CD4-positive, alpha-beta T cell (primary cell): ENCODE measurements at regions of chr6 and their contacts with region 1.

Region 1: GRCh38 chr6:30489081-30490025 is at the start of gene HLA-E:
- DNase-seq: peak; percentile 74 to 99 (median 88)
- ATAC-seq: peak; percentile 80
- H3K4me3 ChIP-seq: peak within 1 kb of the TSS; percentile 83
- H3K4me3 Mint-ChIP-seq: peak within 1 kb of the TSS; percentile 100
- H3K27ac ChIP-seq: peak within 1 kb of the TSS; percentile 95 to 96
- H3K27ac Mint-ChIP-seq: peak within 1 kb of the TSS; percentile 98
- H3K4me1 ChIP-seq: peaks cover 59% of the 10 kb centered on the region
- H3K4me1 Mint-ChIP-seq: peaks cover 62% of the 10 kb centered on the region
- H3K27me3 ChIP-seq: no peaks in the 10 kb centered on the region
- H3K27me3 Mint-ChIP-seq: no peaks in the 10 kb centered on the region
- CTCF ChIP-seq: no peak
- total RNA-seq, gene HLA-E: 1,136 to 1,173 TPM

Region 2: DNA sequence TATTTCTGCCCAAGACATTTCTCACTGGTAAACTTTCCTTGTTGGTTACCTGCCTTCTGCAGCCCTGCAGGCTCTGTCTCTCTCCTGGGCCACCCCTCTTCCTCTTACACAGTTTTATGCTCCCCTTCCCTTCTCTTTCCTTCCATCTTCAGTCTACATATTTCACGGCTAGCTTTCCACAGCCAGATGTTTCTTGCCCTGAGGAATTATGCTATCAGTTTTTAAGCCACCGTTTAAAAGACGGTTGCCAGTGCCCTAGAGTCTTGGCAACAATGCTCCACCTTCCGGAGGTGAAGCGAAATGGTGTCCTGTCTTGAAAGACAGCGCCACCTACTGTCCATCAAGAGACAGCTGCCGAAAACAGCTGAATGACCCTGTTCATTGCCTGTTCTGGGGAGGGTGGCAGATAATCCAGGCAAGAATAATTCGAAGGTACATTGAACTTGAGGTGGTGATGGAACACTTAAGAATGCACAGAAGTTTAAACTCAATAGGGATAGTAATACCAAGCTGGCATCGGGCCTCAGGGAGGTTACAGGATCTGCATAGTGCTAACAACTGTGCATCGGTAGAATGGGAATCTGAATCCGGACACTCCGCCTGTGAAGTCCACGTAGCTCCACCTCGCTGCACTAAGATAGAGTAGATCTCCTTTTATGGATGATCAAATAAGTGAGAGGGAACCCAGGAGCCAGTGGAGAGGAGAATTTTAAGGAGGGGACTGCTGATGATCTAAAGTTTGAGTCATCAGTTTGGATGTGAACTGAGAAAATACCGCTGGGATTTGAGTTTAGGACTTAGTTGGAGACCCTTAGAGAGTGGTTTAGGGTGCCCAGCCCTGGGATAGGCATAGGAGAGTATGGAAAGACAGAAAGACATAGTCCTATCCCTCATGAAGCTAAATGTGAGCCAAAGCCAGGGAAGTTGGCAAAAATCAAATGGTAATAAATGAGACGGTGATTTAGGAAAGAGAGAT is 358.2 kb before region 1 on chr6:
- CTCF ChIA-PET with region 1: no interaction called
- POLR2A ChIA-PET with region 1: no interaction called
- intact Hi-C with region 1: no loop called
- DNase-seq: peak; percentile 45 to 92 (median 60)
- ATAC-seq: peak; percentile 98
- H3K4me3 ChIP-seq: no peak overlapping the region
- H3K4me3 Mint-ChIP-seq: no peak overlapping the region
- H3K27ac ChIP-seq: no peak overlapping the region
- H3K27ac Mint-ChIP-seq: no peak overlapping the region
- H3K4me1 ChIP-seq: peaks cover 13% of the 10 kb centered on the region
- H3K4me1 Mint-ChIP-seq: peaks cover 5% of the 10 kb centered on the region
- H3K27me3 ChIP-seq: peaks cover 37 to 58% of the 10 kb centered on the region in 2 experiments
- H3K27me3 Mint-ChIP-seq: peaks cover 71% of the 10 kb centered on the region
- CTCF ChIP-seq: peak; percentile 100

Region 3: DNA sequence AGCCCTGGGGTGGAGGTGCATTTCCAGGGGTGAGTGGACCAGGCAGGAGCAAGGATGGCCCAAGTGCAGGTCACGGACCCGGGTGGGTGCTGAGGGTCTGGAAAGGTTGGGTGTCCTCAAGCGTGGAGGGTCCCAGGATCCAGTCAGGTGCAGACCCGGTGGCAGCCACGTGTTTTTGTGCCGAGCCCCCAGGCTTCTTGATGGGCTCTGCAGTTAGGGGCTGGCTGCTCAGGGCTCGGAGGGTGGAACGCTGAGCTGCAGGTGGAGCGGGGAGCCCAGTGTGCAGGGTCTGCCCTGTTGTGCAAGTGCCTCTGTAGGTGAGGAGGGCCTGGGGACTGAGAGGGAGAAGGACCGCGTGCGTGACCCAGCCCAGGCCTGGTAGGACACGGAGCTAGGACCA is 70.9 kb before region 1 on chr6:
- CTCF ChIA-PET with region 1: no interaction called
- POLR2A ChIA-PET with region 1: no interaction called
- intact Hi-C with region 1: no loop called
- DNase-seq: no peak
- ATAC-seq: no peak
- H3K4me3 ChIP-seq: no peak overlapping the region
- H3K4me3 Mint-ChIP-seq: no peak overlapping the region
- H3K27ac ChIP-seq: no peak overlapping the region
- H3K27ac Mint-ChIP-seq: no peak overlapping the region
- H3K4me1 ChIP-seq: no peaks in the 10 kb centered on the region
- H3K4me1 Mint-ChIP-seq: no peaks in the 10 kb centered on the region
- H3K27me3 ChIP-seq: peaks cover 2 to 13% of the 10 kb centered on the region in 2 experiments
- H3K27me3 Mint-ChIP-seq: peaks cover 64% of the 10 kb centered on the region
- CTCF ChIP-seq: no peak

Region 4: GRCh38 chr6:30500421-30501355 is 11.3 kb after region 1 on chr6:
- CTCF ChIA-PET with region 1: interaction called, 4 read pairs
- POLR2A ChIA-PET with region 1: interaction called, 77 read pairs
- intact Hi-C with region 1: no loop called
- DNase-seq: peak in 2 of 14 experiments; percentile 37 to 45
- ATAC-seq: peak; percentile 55
- H3K4me3 ChIP-seq: peak overlapping the region; percentile 35
- H3K4me3 Mint-ChIP-seq: peak overlapping the region; percentile 57
- H3K27ac ChIP-seq: peak overlapping the region in 1 of 2 donors; percentile 10
- H3K27ac Mint-ChIP-seq: peak overlapping the region; percentile 75
- H3K4me1 ChIP-seq: peaks cover 29% of the 10 kb centered on the region
- H3K4me1 Mint-ChIP-seq: peaks cover 40% of the 10 kb centered on the region
- H3K27me3 ChIP-seq: no peaks in the 10 kb centered on the region
- H3K27me3 Mint-ChIP-seq: no peaks in the 10 kb centered on the region
- CTCF ChIP-seq: no peak

Region 5: GRCh38 chr6:30508890-30509736 is 19.8 kb after region 1 on chr6:
- CTCF ChIA-PET with region 1: interaction called, 4 read pairs
- POLR2A ChIA-PET with region 1: interaction called, 226 read pairs
- intact Hi-C with region 1: loop called (anchors 2 kb)
- DNase-seq: peak in 3 of 14 experiments; percentile 84 to 88 (median 86)
- ATAC-seq: peak; percentile 85
- H3K4me3 ChIP-seq: peak overlapping the region; percentile 36
- H3K4me3 Mint-ChIP-seq: peak overlapping the region; percentile 72
- H3K27ac ChIP-seq: peak overlapping the region; percentile 47 to 65
- H3K27ac Mint-ChIP-seq: peak overlapping the region; percentile 79
- H3K4me1 ChIP-seq: peaks cover 75% of the 10 kb centered on the region
- H3K4me1 Mint-ChIP-seq: peaks cover 62% of the 10 kb centered on the region
- H3K27me3 ChIP-seq: no peaks in the 10 kb centered on the region
- H3K27me3 Mint-ChIP-seq: no peaks in the 10 kb centered on the region
- CTCF ChIP-seq: no peak

Region 6: DNA sequence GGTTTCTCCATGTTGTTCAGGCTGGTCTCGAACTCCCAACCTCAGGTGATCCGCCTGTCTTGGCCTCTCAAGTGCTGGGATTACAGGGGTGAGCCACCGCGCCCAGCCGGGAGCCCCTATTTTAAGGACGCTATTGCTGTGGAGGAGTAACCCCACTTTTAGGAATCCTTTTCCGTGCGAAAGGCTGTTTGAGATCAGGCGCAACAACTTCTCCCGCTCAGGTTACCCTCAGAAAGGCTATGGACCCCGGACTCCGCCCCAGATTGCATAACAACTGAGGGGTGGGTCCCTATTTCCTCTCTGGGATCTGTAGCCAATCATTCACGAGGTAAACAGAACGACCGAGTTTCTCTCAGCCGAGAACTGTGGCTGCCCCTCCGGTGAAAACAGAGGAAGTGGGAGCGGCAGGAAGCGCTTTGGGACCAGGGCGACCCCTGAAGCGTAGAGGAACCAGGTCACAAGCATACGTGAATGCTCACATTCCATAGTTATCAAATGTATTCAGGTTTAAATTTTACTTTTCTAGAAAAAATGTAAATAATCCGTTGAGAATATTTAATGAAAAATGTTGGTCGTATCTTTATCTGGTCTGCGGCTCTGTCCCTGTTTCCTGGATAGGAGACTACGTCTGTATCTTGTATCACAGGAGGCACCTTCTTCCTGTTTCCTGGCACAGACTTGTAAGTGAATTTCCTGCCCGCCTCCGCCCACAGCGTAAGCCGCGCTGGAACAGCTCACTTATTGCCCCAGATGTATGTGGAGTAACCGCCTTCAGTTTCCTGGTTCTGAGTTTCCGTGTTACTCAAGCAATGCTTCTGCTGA is 26.8 kb after region 1 on chr6:
- CTCF ChIA-PET with region 1: interaction called, 12 read pairs
- POLR2A ChIA-PET with region 1: interaction called, 226 read pairs
- intact Hi-C with region 1: loop called (anchors 1 kb)
- DNase-seq: peak; percentile 78 to 98 (median 87)
- ATAC-seq: peak; percentile 84
- H3K4me3 ChIP-seq: peak overlapping the region; percentile 55
- H3K4me3 Mint-ChIP-seq: peak overlapping the region; percentile 89
- H3K27ac ChIP-seq: peak overlapping the region; percentile 92 to 98
- H3K27ac Mint-ChIP-seq: peak overlapping the region; percentile 99
- H3K4me1 ChIP-seq: peaks cover 83% of the 10 kb centered on the region
- H3K4me1 Mint-ChIP-seq: peaks cover 69% of the 10 kb centered on the region
- H3K27me3 ChIP-seq: no peaks in the 10 kb centered on the region
- H3K27me3 Mint-ChIP-seq: no peaks in the 10 kb centered on the region
- CTCF ChIP-seq: no peak

Region 7: DNA sequence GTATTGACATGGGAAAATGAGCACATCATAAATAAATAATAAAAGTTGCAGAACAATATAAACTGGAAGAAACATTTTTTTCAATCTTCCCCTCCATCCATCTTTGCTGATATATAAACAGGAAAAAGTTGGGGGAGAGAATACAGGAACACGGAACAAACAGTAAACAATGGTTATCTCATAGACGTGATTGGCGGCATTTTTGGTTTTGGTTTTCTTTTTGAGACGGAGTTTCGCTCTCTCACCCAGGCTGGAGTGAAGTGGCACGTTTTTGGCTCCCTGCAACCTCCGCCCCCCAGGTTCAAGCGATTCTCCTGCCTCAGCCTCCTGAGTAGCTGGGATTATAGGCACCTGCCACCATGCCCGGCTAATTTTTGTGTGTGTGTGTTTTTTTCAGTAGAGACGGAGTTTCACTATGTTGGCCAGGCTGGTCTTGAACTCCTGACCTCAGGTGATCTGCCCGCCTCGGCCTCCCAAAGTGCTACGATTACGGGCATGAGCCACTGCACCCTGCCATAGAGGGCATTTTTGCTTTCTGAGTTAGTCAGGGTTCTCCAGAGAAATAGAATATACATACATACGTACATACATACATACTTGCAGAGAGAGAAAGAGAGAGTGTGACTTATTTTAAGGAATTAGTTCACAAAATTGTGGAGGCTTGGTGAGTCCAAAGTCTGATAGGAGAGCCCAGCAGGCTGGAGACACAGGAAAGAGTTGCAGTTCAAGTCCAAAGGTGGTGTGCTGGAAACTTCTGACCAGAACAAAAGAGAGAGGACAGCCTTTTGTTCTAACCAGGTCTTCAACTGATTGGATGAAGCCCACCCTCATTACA is 44.3 kb after region 1 on chr6:
- CTCF ChIA-PET with region 1: interaction called, 34 read pairs
- POLR2A ChIA-PET with region 1: interaction called, 120 read pairs
- intact Hi-C with region 1: no loop called
- DNase-seq: peak in 2 of 14 experiments; percentile 56 to 76
- ATAC-seq: no peak
- H3K4me3 ChIP-seq: peak overlapping the region; percentile 29
- H3K4me3 Mint-ChIP-seq: peak overlapping the region; percentile 90
- H3K27ac ChIP-seq: no peak overlapping the region
- H3K27ac Mint-ChIP-seq: peak overlapping the region; percentile 79
- H3K4me1 ChIP-seq: peaks cover 40% of the 10 kb centered on the region
- H3K4me1 Mint-ChIP-seq: peaks cover 41% of the 10 kb centered on the region
- H3K27me3 ChIP-seq: no peaks in the 10 kb centered on the region
- H3K27me3 Mint-ChIP-seq: no peaks in the 10 kb centered on the region
- CTCF ChIP-seq: no peak

Region 8: DNA sequence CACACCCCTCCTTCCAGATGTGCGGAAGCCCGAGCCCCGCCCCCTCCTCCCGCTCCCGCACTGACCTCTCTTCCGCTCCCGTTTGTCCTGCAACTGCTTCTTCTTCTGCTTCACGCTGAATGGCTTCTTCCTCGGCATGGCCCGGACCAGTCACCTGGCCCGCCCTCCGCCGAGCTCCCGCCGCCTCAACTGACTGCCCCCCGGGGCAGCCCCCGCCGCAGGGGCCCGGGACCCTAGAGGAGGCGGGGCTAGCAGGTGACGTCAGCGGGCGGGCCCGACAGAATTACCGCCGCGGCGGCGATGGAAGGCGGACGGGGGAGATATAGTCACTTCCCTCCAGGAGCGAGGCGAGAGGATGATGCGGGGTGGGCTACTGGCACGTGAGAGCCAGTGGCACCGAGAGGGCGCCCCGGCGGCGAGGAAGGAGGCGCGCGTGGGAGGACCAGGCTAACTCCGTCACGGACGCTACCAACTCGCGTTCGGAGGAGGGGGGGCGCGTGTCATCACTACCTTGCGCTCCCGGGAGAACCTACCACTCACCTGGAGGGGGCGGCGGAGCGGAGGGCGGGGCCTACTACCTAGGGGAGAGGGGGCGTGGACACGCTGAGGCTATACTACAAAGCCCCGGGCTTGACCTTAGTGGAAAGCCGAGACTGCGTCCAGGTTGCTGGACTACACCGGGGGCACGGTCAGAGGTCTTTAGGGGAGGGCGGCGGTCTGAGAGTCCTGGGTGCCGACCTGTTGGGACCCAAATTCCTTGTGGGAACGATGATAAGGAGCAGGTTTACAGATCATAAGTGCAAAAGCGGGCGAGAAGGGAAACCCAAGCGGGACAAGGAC is 66.9 kb after region 1 on chr6 and contains the start of gene GNL1:
- CTCF ChIA-PET with region 1: interaction called, 3 read pairs
- POLR2A ChIA-PET with region 1: interaction called, 24 read pairs
- intact Hi-C with region 1: no loop called
- DNase-seq: peak; percentile 98 to 100 (median 99)
- ATAC-seq: peak; percentile 88
- H3K4me3 ChIP-seq: peak within 1 kb of the TSS; percentile 86
- H3K4me3 Mint-ChIP-seq: peak within 1 kb of the TSS; percentile 98
- H3K27ac ChIP-seq: peak within 1 kb of the TSS; percentile 94 to 97
- H3K27ac Mint-ChIP-seq: peak within 1 kb of the TSS; percentile 97
- H3K4me1 ChIP-seq: peaks cover 27% of the 10 kb centered on the region
- H3K4me1 Mint-ChIP-seq: peaks cover 50% of the 10 kb centered on the region
- H3K27me3 ChIP-seq: no peaks in the 10 kb centered on the region
- H3K27me3 Mint-ChIP-seq: no peaks in the 10 kb centered on the region
- CTCF ChIP-seq: no peak
- total RNA-seq, gene GNL1: 145 to 151 TPM

Region 9: DNA sequence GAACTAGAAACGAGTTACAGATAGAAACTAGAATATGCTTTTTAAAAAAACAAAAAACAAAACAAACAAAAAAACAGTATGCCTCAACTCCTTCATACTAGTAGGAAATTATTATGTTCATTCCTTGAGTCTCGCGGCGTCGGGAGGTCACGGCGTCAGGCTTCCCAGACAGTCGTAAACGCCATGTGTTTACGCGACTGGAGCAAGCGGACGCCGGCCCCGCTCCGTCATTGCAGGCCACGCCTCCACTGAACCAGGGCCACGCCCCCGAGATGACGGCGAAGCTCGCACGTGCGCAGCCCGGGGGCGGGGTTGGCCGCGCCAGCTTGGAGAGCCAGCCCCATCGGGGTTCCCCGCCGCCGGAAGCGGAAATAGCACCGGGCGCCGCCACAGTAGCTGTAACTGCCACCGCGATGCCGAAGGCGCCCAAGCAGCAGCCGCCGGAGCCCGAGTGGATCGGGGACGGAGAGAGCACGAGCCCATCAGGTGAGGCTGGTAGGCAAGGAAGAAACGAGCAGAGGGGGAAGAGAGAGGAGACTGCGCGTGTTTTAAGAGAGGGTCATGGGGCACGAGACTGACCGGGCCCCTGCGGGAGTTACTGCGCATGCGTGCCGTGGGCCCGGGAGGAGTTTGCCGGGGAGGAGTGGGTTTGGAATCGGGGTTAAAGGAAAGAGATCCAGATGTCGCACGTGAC is 81.9 kb after region 1 on chr6 and contains the start of gene ABCF1:
- CTCF ChIA-PET with region 1: interaction called, 3 read pairs
- POLR2A ChIA-PET with region 1: interaction called, 22 read pairs
- intact Hi-C with region 1: no loop called
- DNase-seq: peak; percentile 97 to 100 (median 99)
- ATAC-seq: peak; percentile 90
- H3K4me3 ChIP-seq: peak within 1 kb of the TSS; percentile 82
- H3K4me3 Mint-ChIP-seq: peak within 1 kb of the TSS; percentile 100
- H3K27ac ChIP-seq: peak within 1 kb of the TSS; percentile 94 to 98
- H3K27ac Mint-ChIP-seq: peak within 1 kb of the TSS; percentile 98
- H3K4me1 ChIP-seq: peaks cover 47% of the 10 kb centered on the region
- H3K4me1 Mint-ChIP-seq: peaks cover 56% of the 10 kb centered on the region
- H3K27me3 ChIP-seq: no peaks in the 10 kb centered on the region
- H3K27me3 Mint-ChIP-seq: no peaks in the 10 kb centered on the region
- CTCF ChIP-seq: no peak
- total RNA-seq, gene ABCF1: 86.1 to 88.0 TPM